ENCODE measurements at regions of chr21 and their contacts with region 1.

Region 1: GRCh38 chr21:44927587-44928461 is 7.1 kb upstream of the ITGB2 start:
- DNase-seq: peak; percentile 43 to 95 (median 85)
- ATAC-seq: peak; percentile 84
- H3K4me3 ChIP-seq: peak overlapping the region; percentile 100
- H3K4me3 Mint-ChIP-seq: peak overlapping the region; percentile 86 to 97 (median 93)
- H3K27ac ChIP-seq: peak overlapping the region; percentile 79
- H3K27ac Mint-ChIP-seq: peak overlapping the region; percentile 86 to 98 (median 95)
- H3K4me1 ChIP-seq: peaks cover 54 to 62% of the 10 kb centered on the region in 2 donors
- H3K4me1 Mint-ChIP-seq: peaks cover 65 to 82% (median 78%) of the 10 kb centered on the region in 7 donors
- H3K27me3 ChIP-seq: no peaks in the 10 kb centered on the region
- H3K27me3 Mint-ChIP-seq: no peaks in the 10 kb centered on the region

Region 2: DNA sequence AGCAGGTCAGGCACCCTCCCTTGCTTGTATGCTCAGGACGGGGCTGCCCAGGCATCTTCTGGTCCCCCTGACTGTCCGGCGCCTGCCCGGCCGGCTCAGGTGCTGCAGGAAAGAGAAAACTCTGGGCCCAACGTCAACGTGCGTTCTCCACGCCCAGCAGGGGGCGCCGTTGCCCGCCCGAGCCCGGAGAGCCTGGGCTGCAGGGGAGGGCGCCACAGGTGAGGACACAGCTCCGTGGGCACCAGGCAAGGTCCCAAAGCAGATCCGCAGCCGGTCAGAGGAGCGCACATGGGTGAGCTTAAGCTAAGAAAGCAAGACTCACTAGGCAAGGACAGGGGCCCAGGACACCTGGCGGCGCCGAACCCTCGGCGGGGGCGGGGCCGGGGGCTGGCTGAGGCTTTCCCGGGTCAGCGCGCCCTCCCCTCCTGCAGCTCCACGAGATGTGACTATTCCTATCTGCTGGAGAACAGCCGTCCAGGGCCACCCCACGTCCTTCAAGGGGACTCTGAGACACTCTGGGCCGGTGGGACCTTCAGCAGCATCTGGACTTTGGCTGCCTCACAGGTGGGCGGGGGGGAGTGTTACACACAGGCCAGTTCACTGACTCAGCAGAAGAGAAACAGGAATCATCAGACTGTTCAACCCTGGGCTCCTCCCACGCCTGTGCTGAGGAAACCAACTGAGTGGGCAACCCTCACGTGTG is 417.2 kb before region 1 on chr21:
- CTCF ChIA-PET with region 1: no interaction called
- POLR2A ChIA-PET with region 1: no interaction called
- intact Hi-C with region 1: loop called in 1 of 2 experiments (anchors 5 kb)
- DNase-seq: peak; percentile 65 to 95 (median 85)
- ATAC-seq: peak; percentile 87
- H3K4me3 ChIP-seq: peak overlapping the region; percentile 64
- H3K4me3 Mint-ChIP-seq: peak overlapping the region in 9 of 10 donors; percentile 58 to 75 (median 65)
- H3K27ac ChIP-seq: no peak overlapping the region
- H3K27ac Mint-ChIP-seq: peak overlapping the region in 3 of 9 donors; percentile 6 to 41 (median 38)
- H3K4me1 ChIP-seq: peaks cover 7 to 13% of the 10 kb centered on the region in 2 donors
- H3K4me1 Mint-ChIP-seq: peaks cover 0 to 3% (median 0%) of the 10 kb centered on the region in 7 donors
- H3K27me3 ChIP-seq: no peaks in the 10 kb centered on the region
- H3K27me3 Mint-ChIP-seq: no peaks in the 10 kb centered on the region

Region 3: DNA sequence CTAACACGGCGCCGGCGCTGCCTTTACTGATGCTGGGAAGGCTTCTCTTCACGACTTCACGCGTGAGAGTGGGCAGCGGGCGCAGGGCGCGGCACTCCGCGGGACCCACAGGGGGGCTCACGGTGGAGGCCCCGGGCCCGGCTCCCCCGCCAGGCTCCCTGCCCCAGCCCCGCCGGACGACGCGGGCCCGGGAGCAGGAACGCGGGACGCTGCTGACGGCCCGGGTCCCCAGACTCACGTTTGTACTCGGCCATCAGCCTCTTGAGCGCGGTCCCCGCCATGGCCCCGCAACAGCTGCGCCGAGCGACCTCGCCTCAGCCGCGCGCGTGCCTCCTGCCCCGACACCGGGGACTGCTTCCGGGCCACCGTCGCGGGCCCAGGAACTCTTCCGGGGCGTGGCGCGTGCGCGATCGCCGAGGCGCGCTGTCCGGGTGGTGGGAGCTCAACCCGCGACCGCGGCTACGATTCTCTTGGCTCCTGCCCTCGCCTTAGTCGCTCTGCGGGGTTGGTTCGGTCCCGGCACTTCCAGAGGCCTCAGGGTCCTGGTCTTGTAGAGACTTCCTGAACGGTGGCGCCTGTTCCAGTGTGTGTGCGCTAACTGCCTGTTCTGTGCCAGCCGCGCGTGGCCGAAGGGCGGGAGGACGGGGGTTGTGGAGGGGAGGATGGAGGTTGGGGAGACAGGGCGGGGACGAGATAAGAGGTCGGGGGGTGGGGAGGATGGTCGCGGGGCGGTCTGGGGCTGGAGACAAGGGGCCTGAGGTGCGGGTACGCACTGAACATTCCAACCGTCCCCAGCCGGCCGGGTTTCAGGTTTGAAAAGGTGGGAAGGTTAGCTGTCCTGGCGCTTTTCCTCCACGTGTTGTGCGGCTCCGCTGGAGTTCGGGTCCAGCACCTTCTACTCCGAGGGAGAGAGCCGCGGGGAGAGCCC is 126.1 kb before region 1 on chr21 and contains the start of gene UBE2G2:
- CTCF ChIA-PET with region 1: interaction called, 16 read pairs
- POLR2A ChIA-PET with region 1: interaction called, 33 read pairs
- intact Hi-C with region 1: loop called (anchors 1 to 2 kb)
- DNase-seq: peak; percentile 79 to 95 (median 88)
- ATAC-seq: peak; percentile 95
- H3K4me3 ChIP-seq: peak within 1 kb of the TSS; percentile 92
- H3K4me3 Mint-ChIP-seq: peak within 1 kb of the TSS; percentile 88 to 100 (median 96)
- H3K27ac ChIP-seq: peak within 1 kb of the TSS; percentile 85
- H3K27ac Mint-ChIP-seq: peak within 1 kb of the TSS; percentile 85 to 99 (median 94)
- H3K4me1 ChIP-seq: peaks cover 19 to 27% of the 10 kb centered on the region in 2 donors
- H3K4me1 Mint-ChIP-seq: peaks cover 24 to 53% (median 45%) of the 10 kb centered on the region in 7 donors
- H3K27me3 ChIP-seq: no peaks in the 10 kb centered on the region
- H3K27me3 Mint-ChIP-seq: no peaks in the 10 kb centered on the region
- total RNA-seq, gene UBE2G2: 108 to 150 (median 129) TPM

Region 4: GRCh38 chr21:44834936-44835646 is 92.7 kb before region 1 on chr21:
- CTCF ChIA-PET with region 1: no interaction called
- POLR2A ChIA-PET with region 1: no interaction called
- intact Hi-C with region 1: no loop called
- DNase-seq: no peak
- ATAC-seq: no peak
- H3K4me3 ChIP-seq: no peak overlapping the region
- H3K4me3 Mint-ChIP-seq: no peak overlapping the region
- H3K27ac ChIP-seq: no peak overlapping the region
- H3K27ac Mint-ChIP-seq: no peak overlapping the region
- H3K4me1 ChIP-seq: peaks cover 0 to 5% of the 10 kb centered on the region in 2 donors
- H3K4me1 Mint-ChIP-seq: peaks cover 6 to 17% (median 12%) of the 10 kb centered on the region in 7 donors
- H3K27me3 ChIP-seq: no peaks in the 10 kb centered on the region
- H3K27me3 Mint-ChIP-seq: no peaks in the 10 kb centered on the region

Region 5: DNA sequence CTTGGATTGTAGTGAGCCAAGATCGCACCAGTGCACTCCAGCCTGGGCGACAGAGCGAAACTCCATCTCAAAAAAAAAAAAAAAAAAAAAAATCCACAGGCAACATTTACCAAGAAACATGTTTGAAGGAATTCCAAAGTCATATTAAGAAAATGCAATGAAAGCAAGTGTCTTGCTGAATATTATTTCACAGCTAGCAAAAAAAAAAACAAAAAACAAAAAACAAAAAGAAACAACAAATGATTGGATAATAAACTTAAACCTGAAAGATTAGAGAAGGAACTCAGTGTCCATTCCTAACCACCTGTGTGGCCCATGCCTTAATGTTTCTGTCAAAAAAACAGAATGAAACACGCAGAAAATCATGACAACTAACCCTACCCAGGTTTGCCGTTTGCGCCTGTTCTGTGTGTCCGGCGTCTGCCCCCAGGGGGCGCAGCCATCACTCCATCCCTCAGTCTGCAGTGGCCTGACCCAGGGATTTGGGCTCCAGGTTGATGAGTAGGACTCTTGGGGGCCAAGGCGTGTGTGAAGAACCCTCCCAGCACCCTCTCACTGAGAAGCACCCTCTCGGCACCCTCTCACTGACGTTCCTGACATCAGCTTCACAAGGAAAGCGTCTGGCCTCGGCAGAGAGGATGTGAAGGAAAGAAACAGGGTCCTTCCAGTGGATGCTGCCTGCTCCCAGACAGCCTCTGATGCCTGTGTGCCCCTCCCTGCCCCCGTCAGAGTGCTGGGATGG is 35.1 kb before region 1 on chr21:
- CTCF ChIA-PET with region 1: interaction called, 95 read pairs
- POLR2A ChIA-PET with region 1: interaction called, 104 read pairs
- intact Hi-C with region 1: loop called (anchors 1 kb)
- DNase-seq: peak; percentile 59 to 80 (median 76)
- ATAC-seq: peak; percentile 82
- H3K4me3 ChIP-seq: no peak overlapping the region
- H3K4me3 Mint-ChIP-seq: no peak overlapping the region
- H3K27ac ChIP-seq: peak overlapping the region; percentile 21
- H3K27ac Mint-ChIP-seq: peak overlapping the region in 8 of 9 donors; percentile 61 to 89 (median 79)
- H3K4me1 ChIP-seq: peaks cover 7 to 11% of the 10 kb centered on the region in 2 donors
- H3K4me1 Mint-ChIP-seq: peaks cover 13 to 22% (median 16%) of the 10 kb centered on the region in 7 donors
- H3K27me3 ChIP-seq: no peaks in the 10 kb centered on the region
- H3K27me3 Mint-ChIP-seq: no peaks in the 10 kb centered on the region

Region 6: GRCh38 chr21:44939532-44940115 is 11.8 kb after region 1 on chr21 and contains the start of gene SLX9:
- CTCF ChIA-PET with region 1: interaction called, 4 read pairs
- POLR2A ChIA-PET with region 1: interaction called, 10 read pairs
- intact Hi-C with region 1: loop called (anchors 1 kb)
- DNase-seq: peak; percentile 70 to 88 (median 79)
- ATAC-seq: peak; percentile 94
- H3K4me3 ChIP-seq: peak within 1 kb of the TSS; percentile 83
- H3K4me3 Mint-ChIP-seq: peak within 1 kb of the TSS; percentile 87 to 95 (median 91)
- H3K27ac ChIP-seq: peak within 1 kb of the TSS; percentile 80
- H3K27ac Mint-ChIP-seq: peak within 1 kb of the TSS; percentile 82 to 96 (median 87)
- H3K4me1 ChIP-seq: peaks cover 22 to 34% of the 10 kb centered on the region in 2 donors
- H3K4me1 Mint-ChIP-seq: peaks cover 30 to 55% (median 45%) of the 10 kb centered on the region in 7 donors
- H3K27me3 ChIP-seq: no peaks in the 10 kb centered on the region
- H3K27me3 Mint-ChIP-seq: no peaks in the 10 kb centered on the region
- total RNA-seq, gene SLX9: 17.8 to 46.4 (median 20.6) TPM